ENCODE measurements at regions of chr5 and their contacts with region 1.

Region 1: GRCh38 chr5:132466433-132467286 is 23.9 kb downstream of the IRF1 start:
- DNase-seq: peak; percentile 88 to 99 (median 98)
- H3K4me3 ChIP-seq: peak overlapping the region in 4 of 7 experiments; percentile 29 to 66 (median 40)
- H3K27ac ChIP-seq: peak overlapping the region; percentile 67 to 69
- H3K4me1 ChIP-seq: peaks cover 45 to 93% (median 87%) of the 10 kb centered on the region in 4 experiments
- H3K27me3 ChIP-seq: no peaks in the 10 kb centered on the region

Region 2: GRCh38 chr5:132190161-132190817 is 276.4 kb before region 1 on chr5:
- CTCF ChIA-PET with region 1: no interaction called
- POLR2A ChIA-PET with region 1: no interaction called
- DNase-seq: peak; percentile 67 to 82 (median 81)
- H3K4me3 ChIP-seq: no peak overlapping the region
- H3K27ac ChIP-seq: no peak overlapping the region
- H3K4me1 ChIP-seq: no peaks in the 10 kb centered on the region
- H3K27me3 ChIP-seq: no peaks in the 10 kb centered on the region

Region 3: GRCh38 chr5:132293066-132293991 is 173.3 kb before region 1 on chr5:
- CTCF ChIA-PET with region 1: no interaction called
- POLR2A ChIA-PET with region 1: no interaction called
- DNase-seq: peak; percentile 84 to 93 (median 93)
- H3K4me3 ChIP-seq: peak overlapping the region; percentile 24 to 88 (median 68)
- H3K27ac ChIP-seq: peak overlapping the region; percentile 53 to 78
- H3K4me1 ChIP-seq: peaks cover 14 to 43% (median 36%) of the 10 kb centered on the region in 4 experiments
- H3K27me3 ChIP-seq: peaks cover 0 to 2% (median 0%) of the 10 kb centered on the region in 5 experiments

Region 4: DNA sequence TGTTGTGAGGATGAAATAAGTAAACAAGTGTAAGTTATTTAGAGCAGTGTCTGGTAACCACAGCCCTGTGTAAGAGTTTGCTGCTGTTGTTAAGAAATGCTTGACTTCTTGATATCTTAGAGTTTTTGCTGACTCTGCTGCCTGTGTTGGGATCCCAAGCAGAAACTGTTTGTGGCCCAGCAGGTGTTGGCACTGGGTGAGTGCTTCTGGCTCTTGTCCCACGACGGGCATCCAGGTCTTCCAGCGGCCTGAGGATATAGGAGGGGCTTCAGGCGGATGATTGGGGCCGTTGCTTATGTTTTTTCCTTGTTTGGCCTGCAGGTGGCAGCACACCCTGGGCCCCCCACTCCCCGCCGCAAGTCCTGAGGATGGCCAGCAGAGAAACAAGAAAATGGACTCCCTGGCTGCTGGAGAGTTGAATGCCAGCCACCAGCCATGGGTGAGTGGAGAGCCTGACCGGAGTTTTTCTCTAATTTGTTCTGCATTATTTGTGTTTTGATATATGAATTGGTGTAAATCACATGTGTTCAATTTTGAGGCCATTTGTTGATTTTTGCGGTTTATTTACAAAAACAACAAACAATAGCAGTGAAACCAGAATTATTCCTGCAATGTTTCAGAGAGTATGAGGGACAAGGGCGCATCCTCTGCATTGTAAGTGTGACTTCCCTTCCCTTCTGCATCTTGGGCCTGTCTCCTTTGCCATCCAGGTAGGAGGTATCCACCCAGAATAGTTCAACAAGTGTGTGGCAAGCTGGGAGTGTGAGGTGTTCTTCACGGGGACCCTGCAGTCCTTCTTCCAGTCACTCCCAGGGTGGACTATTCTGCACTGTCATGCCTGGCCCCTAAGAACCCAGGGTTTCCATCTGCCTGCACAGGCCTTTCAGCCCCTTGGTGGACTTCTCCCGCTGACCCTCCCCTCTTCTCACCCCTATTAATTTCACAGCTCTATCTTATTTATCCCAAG is 46.9 kb before region 1 on chr5:
- CTCF ChIA-PET with region 1: interaction called, 98 read pairs
- POLR2A ChIA-PET with region 1: interaction called, 26 read pairs
- DNase-seq: peak; percentile 74 to 83 (median 81)
- H3K4me3 ChIP-seq: peak overlapping the region in 4 of 7 experiments; percentile 27 to 58 (median 39)
- H3K27ac ChIP-seq: peak overlapping the region; percentile 71 to 80
- H3K4me1 ChIP-seq: peaks cover 41 to 97% (median 83%) of the 10 kb centered on the region in 4 experiments
- H3K27me3 ChIP-seq: no peaks in the 10 kb centered on the region

Region 5: GRCh38 chr5:132437604-132438266 is 28.9 kb before region 1 on chr5:
- CTCF ChIA-PET with region 1: interaction called, 59 read pairs
- POLR2A ChIA-PET with region 1: interaction called, 4 read pairs
- DNase-seq: peak in 2 of 3 donors; percentile 62 to 72
- H3K4me3 ChIP-seq: peak overlapping the region in 1 of 7 experiments; percentile 10
- H3K27ac ChIP-seq: peak overlapping the region; percentile 37 to 75
- H3K4me1 ChIP-seq: peaks cover 16 to 74% (median 62%) of the 10 kb centered on the region in 4 experiments
- H3K27me3 ChIP-seq: no peaks in the 10 kb centered on the region

Region 6: DNA sequence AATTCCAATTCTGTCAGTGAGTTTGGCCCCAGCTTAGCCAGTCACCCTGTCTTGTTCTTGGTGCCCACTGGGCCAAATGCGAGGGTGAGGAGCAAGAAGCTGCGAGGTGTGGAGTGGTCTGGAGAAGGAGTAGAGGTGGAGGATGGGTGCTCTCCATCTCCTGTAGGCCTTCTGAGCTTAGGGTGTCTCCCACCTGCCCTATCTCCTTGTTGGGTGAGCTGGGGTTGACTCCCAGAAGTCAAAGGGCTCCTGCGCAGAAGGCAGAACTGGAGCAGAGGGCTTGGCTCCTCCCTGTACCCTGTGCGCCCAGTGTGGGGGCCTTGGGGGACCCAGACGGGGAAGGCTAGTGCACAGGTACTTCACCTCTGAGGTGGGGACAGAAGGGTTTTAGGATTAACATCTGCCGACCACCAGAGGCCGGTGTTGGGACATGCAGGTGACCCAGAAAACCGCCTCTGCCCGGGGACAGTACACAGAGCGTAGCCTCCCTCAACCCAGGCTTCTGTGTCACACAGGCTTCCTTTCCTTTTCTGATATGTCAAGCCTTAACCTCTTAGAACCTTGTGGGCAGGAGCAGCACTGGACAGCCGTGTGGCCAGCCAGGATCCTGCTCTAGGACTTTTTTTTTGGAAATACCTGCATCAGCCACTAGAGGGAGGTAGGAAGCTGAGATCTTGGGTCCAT is 59.8 kb after region 1 on chr5:
- CTCF ChIA-PET with region 1: no interaction called
- POLR2A ChIA-PET with region 1: no interaction called
- DNase-seq: peak; percentile 47 to 66 (median 60)
- H3K4me3 ChIP-seq: peak overlapping the region in 6 of 7 experiments; percentile 32 to 75 (median 42)
- H3K27ac ChIP-seq: no peak overlapping the region
- H3K4me1 ChIP-seq: peaks cover 22 to 67% (median 48%) of the 10 kb centered on the region in 4 experiments
- H3K27me3 ChIP-seq: no peaks in the 10 kb centered on the region